Activated CD4-positive, alpha-beta T cell treated with anti-CD3 and anti-CD28 coated beads, Interleukin-2, amount 10 ng/mL, durations not matched to agents 24 days and 14 days (primary cell): ENCODE measurements at regions of chr7 and their contacts with region 1.

Region 1: GRCh38 chr7:158829342-158830210 is at the start of gene ESYT2:
- DNase-seq: peak; percentile 100
- H3K4me3 Mint-ChIP-seq: peak within 1 kb of the TSS; percentile 87
- H3K27ac Mint-ChIP-seq: peak within 1 kb of the TSS; percentile 93
- H3K4me1 Mint-ChIP-seq: peaks cover 39% of the 10 kb centered on the region
- H3K27me3 Mint-ChIP-seq: peaks cover 11% of the 10 kb centered on the region
- total RNA-seq, gene ESYT2: 60.3 and 61.3 TPM in 2 replicates

Region 2: DNA sequence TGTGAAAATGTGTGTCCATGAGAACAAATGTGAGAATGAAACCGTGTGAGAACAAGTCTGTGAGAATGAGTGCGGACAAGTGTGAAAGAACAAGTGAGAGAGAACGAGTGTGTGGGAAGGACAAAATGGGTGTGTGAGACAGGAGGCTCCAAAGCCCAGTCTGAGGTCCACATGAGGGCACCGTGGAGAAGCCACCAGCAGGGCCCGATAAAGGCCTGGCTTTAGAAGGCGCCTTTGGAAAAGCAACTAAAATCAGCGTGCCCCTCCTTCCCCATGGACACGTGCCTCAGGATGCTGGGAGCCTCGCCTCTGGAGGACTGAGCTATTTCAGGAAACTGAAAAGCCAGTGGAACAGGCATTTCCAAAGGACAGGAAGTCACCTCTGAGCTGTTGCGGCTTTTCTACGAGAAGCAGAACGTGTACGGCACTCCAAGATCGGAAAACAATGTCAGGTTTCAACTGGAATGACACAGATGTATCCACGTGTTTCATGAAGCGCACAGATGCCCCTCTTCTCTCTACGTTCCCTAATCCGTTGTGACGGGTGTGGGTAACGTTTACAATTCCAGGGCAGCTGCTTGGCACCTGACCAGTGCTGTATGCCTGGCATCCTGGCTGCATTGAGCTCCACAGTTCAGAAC is 46.7 kb before region 1 on chr7:
- intact Hi-C with region 1: loop called (anchors 5 kb)
- DNase-seq: peak; percentile 66
- H3K4me3 Mint-ChIP-seq: no peak overlapping the region
- H3K27ac Mint-ChIP-seq: no peak overlapping the region
- H3K4me1 Mint-ChIP-seq: peaks cover 2% of the 10 kb centered on the region
- H3K27me3 Mint-ChIP-seq: no peaks in the 10 kb centered on the region

Region 3: GRCh38 chr7:158818325-158819213 is 11.0 kb before region 1 on chr7:
- intact Hi-C with region 1: loop called (anchors 1 kb)
- DNase-seq: peak; percentile 95
- H3K4me3 Mint-ChIP-seq: peak overlapping the region; percentile 89
- H3K27ac Mint-ChIP-seq: peak overlapping the region; percentile 96
- H3K4me1 Mint-ChIP-seq: peaks cover 81% of the 10 kb centered on the region
- H3K27me3 Mint-ChIP-seq: no peaks in the 10 kb centered on the region

Region 4: GRCh38 chr7:158856883-158857668 is 27.5 kb after region 1 on chr7:
- intact Hi-C with region 1: loop called (anchors 1 kb)
- DNase-seq: no peak
- H3K4me3 Mint-ChIP-seq: peak overlapping the region; percentile 99
- H3K27ac Mint-ChIP-seq: peak overlapping the region; percentile 51
- H3K4me1 Mint-ChIP-seq: peaks cover 28% of the 10 kb centered on the region
- H3K27me3 Mint-ChIP-seq: no peaks in the 10 kb centered on the region

Region 5: DNA sequence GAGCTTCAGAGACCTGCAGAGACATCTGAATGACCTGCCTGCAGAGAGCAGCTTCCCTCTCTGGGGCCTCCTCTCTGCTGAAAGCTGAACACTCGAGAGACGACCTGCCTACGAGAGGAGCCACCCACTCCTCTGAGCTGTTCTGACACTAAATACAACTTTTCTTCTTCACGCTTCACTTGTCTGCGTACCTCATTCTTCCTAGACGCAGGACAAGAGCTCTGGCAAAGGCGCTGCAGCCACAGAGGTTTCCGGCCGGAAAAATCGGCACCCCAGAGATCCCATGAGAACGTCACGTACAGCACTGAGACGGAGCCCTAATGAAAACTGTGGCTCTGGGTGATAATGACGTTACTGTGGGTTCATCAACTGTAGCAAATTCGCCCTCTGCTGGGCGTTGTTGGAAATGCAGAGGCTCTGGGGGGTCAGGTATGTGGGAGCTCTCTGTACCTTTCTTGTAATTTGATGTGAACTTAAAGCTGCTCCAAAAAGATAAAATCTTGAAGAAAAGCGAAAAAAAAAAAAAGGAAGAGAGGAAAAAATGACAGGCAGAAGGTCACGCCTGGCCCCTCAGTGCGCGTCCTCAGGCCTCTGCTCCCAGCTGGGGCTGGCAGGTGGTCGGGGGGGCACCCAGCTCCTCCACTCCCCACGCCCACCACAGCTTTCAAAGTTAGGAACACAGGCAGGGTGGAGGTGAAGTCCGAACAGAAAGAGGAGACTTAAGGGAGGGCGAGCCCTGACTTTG is 147.4 kb after region 1 on chr7:
- intact Hi-C with region 1: loop called (anchors 1 kb)
- DNase-seq: peak; percentile 96
- H3K4me3 Mint-ChIP-seq: peak overlapping the region; percentile 78
- H3K27ac Mint-ChIP-seq: peak overlapping the region; percentile 91
- H3K4me1 Mint-ChIP-seq: peaks cover 15% of the 10 kb centered on the region
- H3K27me3 Mint-ChIP-seq: no peaks in the 10 kb centered on the region

Region 6: DNA sequence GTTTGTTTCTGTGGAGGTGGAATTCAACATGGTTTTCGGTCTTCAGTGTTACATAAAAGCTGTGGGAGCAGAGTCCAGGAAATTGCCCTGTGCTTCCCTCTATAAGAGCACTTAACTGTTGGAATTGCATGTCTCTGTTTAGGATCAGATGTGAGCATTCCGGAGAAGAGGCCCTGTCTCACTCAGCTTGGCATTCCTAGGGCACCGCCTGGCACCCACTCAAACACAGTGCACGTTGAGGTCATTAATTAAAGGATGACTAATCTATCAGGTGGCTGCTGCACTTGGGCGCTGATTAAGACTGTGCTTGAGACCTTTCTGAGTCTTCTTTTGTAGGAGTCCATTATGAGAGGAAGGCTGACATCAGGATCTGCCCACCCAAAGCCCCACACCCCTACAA is 397.9 kb after region 1 on chr7:
- intact Hi-C with region 1: no loop called
- DNase-seq: peak; percentile 35
- H3K4me3 Mint-ChIP-seq: no peak overlapping the region
- H3K27ac Mint-ChIP-seq: no peak overlapping the region
- H3K4me1 Mint-ChIP-seq: no peaks in the 10 kb centered on the region
- H3K27me3 Mint-ChIP-seq: peaks cover 8% of the 10 kb centered on the region